ENCODE measurements at regions of chr14 and their contacts with region 1.

Region 1: DNA sequence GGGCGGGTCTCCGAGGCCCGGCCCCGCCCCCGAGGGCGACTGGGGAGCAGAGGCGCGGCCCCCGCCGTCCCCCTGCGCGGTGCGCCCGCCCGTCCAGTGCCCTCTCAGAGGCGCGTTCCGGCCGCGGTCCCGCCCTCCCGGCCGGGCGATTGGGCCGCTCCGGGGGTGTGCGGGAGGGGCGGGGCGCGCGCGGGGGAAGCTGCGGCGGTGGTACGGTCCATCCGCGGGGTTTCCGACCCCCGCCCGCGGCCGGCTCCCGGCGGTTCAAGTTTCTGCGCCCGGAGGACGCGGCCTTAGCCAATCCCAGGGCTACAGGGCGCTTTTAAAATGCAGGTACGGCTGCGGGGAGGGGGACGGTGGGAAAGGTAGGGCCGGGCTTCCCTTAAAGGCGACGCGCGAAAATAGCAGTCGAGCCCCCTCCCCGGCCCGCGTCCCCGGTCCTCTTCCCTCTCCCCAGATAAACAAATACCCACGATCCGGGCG is 317 bp upstream of the CCDC85C start:
- DNase-seq: peak; percentile 91 to 98 (median 94)
- ATAC-seq: peak; percentile 89
- H3K4me3 ChIP-seq: peak overlapping the region; percentile 92 to 98
- H3K4me3 Mint-ChIP-seq: peak overlapping the region; percentile 90
- H3K27ac ChIP-seq: peak overlapping the region; percentile 66 to 73
- H3K27ac Mint-ChIP-seq: peak overlapping the region; percentile 84
- H3K4me1 ChIP-seq: peaks cover 23% of the 10 kb centered on the region
- H3K4me1 Mint-ChIP-seq: peaks cover 27% of the 10 kb centered on the region
- H3K27me3 ChIP-seq: no peaks in the 10 kb centered on the region
- H3K27me3 Mint-ChIP-seq: no peaks in the 10 kb centered on the region
- CTCF ChIP-seq: no peak

Region 2: GRCh38 chr14:99480917-99481744 is 123.2 kb before region 1 on chr14 and contains the start of gene CCNK:
- CTCF ChIA-PET with region 1: no interaction called
- POLR2A ChIA-PET with region 1: interaction called, 14 read pairs
- intact Hi-C with region 1: loop called in 1 of 2 experiments (anchors 1 kb)
- DNase-seq: peak; percentile 100
- ATAC-seq: peak; percentile 87
- H3K4me3 ChIP-seq: peak within 1 kb of the TSS; percentile 97 to 99
- H3K4me3 Mint-ChIP-seq: peak within 1 kb of the TSS; percentile 99
- H3K27ac ChIP-seq: peak within 1 kb of the TSS; percentile 95 to 96
- H3K27ac Mint-ChIP-seq: peak within 1 kb of the TSS; percentile 99
- H3K4me1 ChIP-seq: peaks cover 38% of the 10 kb centered on the region
- H3K4me1 Mint-ChIP-seq: peaks cover 60% of the 10 kb centered on the region
- H3K27me3 ChIP-seq: no peaks in the 10 kb centered on the region
- H3K27me3 Mint-ChIP-seq: no peaks in the 10 kb centered on the region
- CTCF ChIP-seq: no peak
- total RNA-seq, gene CCNK: 171 to 177 TPM

Region 3: DNA sequence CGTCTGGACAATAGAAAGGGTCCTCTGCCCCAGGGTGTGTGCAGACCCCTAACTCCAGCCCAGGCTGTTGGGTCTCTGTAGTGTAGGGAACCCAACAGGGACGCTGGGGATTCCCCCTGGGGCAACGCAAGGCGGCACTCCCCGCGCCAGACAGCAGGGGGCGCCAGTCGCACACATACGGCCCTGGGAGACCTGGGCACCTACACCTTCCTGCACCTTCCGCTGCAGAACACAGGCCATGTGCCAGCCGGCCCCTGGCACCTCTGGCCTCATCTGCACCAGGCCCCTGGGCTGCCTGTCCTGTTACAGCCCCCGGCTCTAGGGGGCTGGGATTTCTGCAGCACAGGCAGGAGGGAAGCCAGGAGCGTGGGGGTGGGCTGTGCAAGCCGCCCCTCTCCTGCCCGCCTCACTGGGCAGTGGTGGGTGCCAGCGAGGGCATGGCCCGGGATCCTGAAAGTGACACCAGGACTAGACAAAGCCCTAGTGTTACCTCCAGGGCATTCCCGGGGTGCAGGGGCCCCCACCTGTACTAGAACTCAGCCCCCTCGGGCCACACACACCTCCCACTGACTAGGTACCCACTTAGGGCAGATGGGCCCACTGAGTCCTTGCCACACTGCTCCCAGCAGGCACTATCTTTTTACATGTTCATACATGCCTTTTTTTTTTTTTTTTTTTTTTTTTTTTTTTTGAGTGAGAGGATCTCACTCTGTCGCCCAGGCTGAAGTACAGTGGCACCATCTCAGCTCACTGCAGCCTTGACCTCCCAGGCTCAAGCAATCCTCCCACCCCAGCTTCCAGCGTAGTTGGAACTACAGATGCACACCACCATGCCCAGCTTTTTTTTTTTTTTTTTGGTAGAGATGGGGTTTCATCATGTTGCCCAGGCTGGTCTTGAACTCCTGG is 85.6 kb before region 1 on chr14:
- CTCF ChIA-PET with region 1: interaction called, 5 read pairs
- POLR2A ChIA-PET with region 1: no interaction called
- intact Hi-C with region 1: loop called in 1 of 2 experiments (anchors 5 kb)
- DNase-seq: peak; percentile 68 to 92 (median 80)
- ATAC-seq: peak; percentile 91
- H3K4me3 ChIP-seq: no peak overlapping the region
- H3K4me3 Mint-ChIP-seq: no peak overlapping the region
- H3K27ac ChIP-seq: no peak overlapping the region
- H3K27ac Mint-ChIP-seq: no peak overlapping the region
- H3K4me1 ChIP-seq: peaks cover 3% of the 10 kb centered on the region
- H3K4me1 Mint-ChIP-seq: no peaks in the 10 kb centered on the region
- H3K27me3 ChIP-seq: no peaks in the 10 kb centered on the region
- H3K27me3 Mint-ChIP-seq: no peaks in the 10 kb centered on the region
- CTCF ChIP-seq: peak; percentile 88

Region 4: DNA sequence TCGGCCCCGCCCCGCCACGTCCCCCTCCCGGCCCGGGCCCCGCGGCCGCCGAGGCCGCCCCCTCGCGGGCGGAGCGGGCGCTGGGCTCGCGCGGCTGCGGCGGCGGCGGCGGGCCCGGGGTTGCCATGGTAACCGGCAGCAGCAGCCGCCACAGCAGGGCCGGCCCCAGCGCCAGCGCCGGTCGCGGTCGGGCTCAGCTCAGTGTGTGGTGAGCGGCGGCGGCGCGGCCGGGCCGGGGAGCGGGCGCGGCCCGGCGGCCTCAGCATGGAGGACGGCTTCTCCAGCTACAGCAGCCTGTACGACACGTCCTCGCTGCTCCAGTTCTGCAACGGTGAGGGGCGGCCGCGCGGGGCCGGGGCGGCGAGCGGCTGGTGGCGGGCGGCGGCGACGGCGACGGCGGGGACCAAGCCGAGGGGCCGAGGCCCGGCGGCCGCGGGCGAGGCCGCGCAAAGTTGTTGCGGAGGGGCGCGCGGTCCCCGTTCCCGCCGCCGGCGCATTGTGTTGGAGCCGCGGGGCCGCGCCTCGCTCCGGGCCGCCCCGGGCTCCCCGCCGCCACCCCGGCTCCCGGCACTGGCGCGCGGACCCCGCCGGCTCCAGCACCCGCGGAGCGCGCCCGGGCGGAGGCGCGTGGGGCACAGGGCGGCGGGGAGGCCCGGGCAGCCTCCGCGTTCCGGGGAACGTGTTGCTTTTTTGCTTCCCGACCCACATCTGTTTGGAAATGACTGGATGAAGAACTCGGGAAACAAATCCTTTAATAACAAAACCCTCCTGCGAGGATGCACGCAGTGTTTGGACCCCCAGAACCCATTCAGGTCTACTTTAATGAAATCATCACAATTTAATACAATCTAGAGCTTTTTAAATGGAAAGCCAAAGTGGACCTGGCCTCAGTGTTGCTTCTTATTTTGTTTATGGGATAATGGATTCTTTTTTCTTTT is 189.2 kb after region 1 on chr14 and contains the start of gene EML1:
- CTCF ChIA-PET with region 1: interaction called, 3 read pairs
- POLR2A ChIA-PET with region 1: no interaction called
- intact Hi-C with region 1: loop called in 1 of 2 experiments (anchors 2 kb)
- DNase-seq: peak; percentile 44 to 88 (median 67)
- ATAC-seq: peak; percentile 80
- H3K4me3 ChIP-seq: peak within 1 kb of the TSS in 1 of 2 experiments; percentile 26
- H3K4me3 Mint-ChIP-seq: peak within 1 kb of the TSS; percentile 80
- H3K27ac ChIP-seq: no peak within 1 kb of the TSS
- H3K27ac Mint-ChIP-seq: peak within 1 kb of the TSS; percentile 11
- H3K4me1 ChIP-seq: peaks cover 7% of the 10 kb centered on the region
- H3K4me1 Mint-ChIP-seq: peaks cover 14% of the 10 kb centered on the region
- H3K27me3 ChIP-seq: peaks cover 0 to 15% of the 10 kb centered on the region in 2 experiments
- H3K27me3 Mint-ChIP-seq: peaks cover 22% of the 10 kb centered on the region
- CTCF ChIP-seq: no peak
- total RNA-seq, gene EML1: not detected

Region 5: GRCh38 chr14:99971087-99971940 is 367.0 kb after region 1 on chr14:
- CTCF ChIA-PET with region 1: no interaction called
- POLR2A ChIA-PET with region 1: no interaction called
- intact Hi-C with region 1: loop called in 1 of 2 experiments (anchors 2 kb)
- DNase-seq: peak; percentile 62 to 89 (median 78)
- ATAC-seq: peak; percentile 92
- H3K4me3 ChIP-seq: peak overlapping the region; percentile 35 to 67
- H3K4me3 Mint-ChIP-seq: peak overlapping the region; percentile 78
- H3K27ac ChIP-seq: no peak overlapping the region
- H3K27ac Mint-ChIP-seq: no peak overlapping the region
- H3K4me1 ChIP-seq: peaks cover 11% of the 10 kb centered on the region
- H3K4me1 Mint-ChIP-seq: peaks cover 12% of the 10 kb centered on the region
- H3K27me3 ChIP-seq: no peaks in the 10 kb centered on the region
- H3K27me3 Mint-ChIP-seq: peaks cover 5% of the 10 kb centered on the region
- CTCF ChIP-seq: no peak

Region 6: DNA sequence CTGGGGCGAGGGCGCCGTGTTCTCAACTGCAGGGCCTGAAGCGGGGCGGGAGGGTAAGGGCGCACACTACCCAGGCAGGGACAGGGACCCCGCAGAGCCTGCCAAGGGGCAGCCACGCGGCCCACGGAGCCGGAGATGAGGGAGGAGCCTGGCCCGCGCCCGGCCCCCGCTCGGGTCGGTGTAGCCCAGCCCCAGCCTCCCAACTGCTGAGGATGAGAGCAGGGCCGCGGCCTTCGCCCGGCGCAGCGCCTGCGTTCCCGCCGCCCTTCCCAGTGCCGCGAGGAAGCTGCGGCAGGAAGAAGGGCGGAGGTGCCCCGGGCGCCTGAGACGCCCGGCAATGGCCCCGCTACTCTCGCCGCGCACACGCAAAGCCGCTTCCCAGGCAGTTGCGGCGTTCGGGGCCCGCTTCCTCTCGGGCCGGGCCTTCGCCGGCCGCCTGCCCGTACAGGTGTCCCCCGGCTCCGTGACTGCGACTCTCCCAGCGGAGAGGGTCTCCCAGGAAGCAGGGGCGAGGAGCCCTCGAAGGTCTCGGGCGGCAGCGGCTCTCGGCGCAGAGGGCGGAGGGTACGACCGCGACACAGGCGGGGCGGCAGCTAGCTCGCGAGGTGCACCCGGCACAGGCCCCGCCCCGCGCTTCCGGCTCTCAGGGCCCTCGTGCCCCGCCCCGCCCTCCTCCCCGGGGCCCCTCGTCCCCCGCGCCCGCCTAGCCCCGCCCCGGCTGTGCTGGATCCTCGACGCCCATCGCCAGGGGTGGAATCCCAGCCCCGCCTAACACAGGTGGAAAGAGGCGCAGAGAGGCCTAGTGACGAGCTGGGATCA is 609.8 kb after region 1 on chr14:
- CTCF ChIA-PET with region 1: no interaction called
- POLR2A ChIA-PET with region 1: no interaction called
- intact Hi-C with region 1: loop called in 1 of 2 experiments (anchors 10 kb)
- DNase-seq: peak; percentile 78 to 95 (median 92)
- ATAC-seq: peak; percentile 97
- H3K4me3 ChIP-seq: peak overlapping the region; percentile 70 to 92
- H3K4me3 Mint-ChIP-seq: peak overlapping the region; percentile 80
- H3K27ac ChIP-seq: peak overlapping the region; percentile 88 to 90
- H3K27ac Mint-ChIP-seq: peak overlapping the region; percentile 90
- H3K4me1 ChIP-seq: peaks cover 33% of the 10 kb centered on the region
- H3K4me1 Mint-ChIP-seq: peaks cover 29% of the 10 kb centered on the region
- H3K27me3 ChIP-seq: no peaks in the 10 kb centered on the region
- H3K27me3 Mint-ChIP-seq: no peaks in the 10 kb centered on the region
- CTCF ChIP-seq: no peak

Region 7: GRCh38 chr14:100306420-100307219 is 702.3 kb after region 1 on chr14 and contains the start of gene SLC25A29:
- CTCF ChIA-PET with region 1: no interaction called
- POLR2A ChIA-PET with region 1: no interaction called
- intact Hi-C with region 1: loop called (anchors 5 to 10 kb)
- DNase-seq: peak; percentile 39 to 89 (median 76)
- ATAC-seq: peak; percentile 77
- H3K4me3 ChIP-seq: peak within 1 kb of the TSS; percentile 60 to 76
- H3K4me3 Mint-ChIP-seq: peak within 1 kb of the TSS; percentile 86
- H3K27ac ChIP-seq: no peak within 1 kb of the TSS
- H3K27ac Mint-ChIP-seq: peak within 1 kb of the TSS; percentile 60
- H3K4me1 ChIP-seq: peaks cover 18% of the 10 kb centered on the region
- H3K4me1 Mint-ChIP-seq: peaks cover 18% of the 10 kb centered on the region
- H3K27me3 ChIP-seq: no peaks in the 10 kb centered on the region
- H3K27me3 Mint-ChIP-seq: no peaks in the 10 kb centered on the region
- CTCF ChIP-seq: no peak
- total RNA-seq, gene SLC25A29: 19.4 to 22.8 TPM

Measured in CD8-positive, alpha-beta T cell (primary cell).